ENCODE measurements at regions of chr1 and their contacts with region 1.

Region 1: DNA sequence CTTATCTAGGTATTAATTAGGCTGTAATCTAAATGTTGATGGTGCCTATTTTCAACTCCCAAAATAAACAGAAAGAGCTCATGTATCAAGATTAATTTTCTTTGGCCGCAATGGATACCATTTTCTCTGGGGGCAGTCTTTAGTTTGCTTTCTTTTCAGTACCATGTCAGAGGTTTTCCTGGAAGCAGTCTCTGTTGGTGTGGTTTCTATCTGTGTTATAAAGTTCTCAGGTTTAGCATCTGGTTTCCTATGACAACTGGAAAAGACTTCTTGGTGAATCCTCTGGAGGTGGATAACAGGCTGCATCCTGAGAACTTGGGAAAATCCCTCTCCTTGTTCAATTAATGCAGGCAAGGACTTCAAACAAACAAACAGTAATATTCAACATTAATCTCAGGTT is 38.7 kb upstream of the BATF3 start:
- DNase-seq: no peak
- ATAC-seq: peak; percentile 69
- H3K4me3 Mint-ChIP-seq: no peak overlapping the region
- H3K27ac Mint-ChIP-seq: peak overlapping the region; percentile 76
- H3K4me1 Mint-ChIP-seq: peaks cover 25% of the 10 kb centered on the region
- H3K27me3 Mint-ChIP-seq: no peaks in the 10 kb centered on the region
- CTCF ChIP-seq: no peak

Region 2: DNA sequence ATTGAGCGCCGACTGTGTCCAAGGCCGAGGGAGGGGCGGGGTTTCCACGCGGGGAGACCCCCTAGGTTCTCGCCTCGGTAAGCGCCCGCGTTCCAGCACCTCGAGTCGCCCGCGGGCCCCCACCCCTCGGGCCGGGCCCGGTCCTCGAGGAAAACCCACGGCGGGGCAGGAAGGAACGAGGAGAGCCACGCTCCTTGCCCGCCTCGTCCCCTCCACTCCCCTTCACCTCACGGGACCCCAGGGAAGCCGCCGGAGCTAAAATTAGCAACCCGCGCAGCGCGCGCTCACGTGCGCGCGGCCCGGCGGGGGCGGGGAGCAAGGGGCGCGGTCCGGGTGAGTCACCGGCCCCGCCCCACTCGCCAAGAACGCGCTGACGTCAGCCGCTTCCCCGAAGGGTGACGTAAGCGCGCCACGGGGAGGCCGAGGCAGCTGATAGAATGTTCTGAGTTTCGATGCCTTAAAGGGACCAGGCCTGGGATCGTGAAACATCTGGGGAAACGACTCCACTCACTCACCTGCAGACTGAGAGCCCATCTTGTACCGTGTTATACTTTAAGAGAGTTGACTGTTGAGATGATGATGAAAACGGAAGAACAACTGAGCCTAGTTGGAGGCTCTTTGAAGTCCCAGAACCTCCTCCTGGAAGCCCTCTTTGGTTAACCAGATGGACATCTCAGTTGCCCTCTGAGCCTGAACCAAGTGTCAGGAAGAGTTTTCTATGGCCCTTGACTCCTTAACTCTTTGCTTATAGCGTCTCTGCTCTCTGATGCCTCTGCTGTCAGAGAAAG is 179.4 kb before region 1 on chr1:
- CTCF ChIA-PET with region 1: no interaction called
- POLR2A ChIA-PET with region 1: no interaction called
- intact Hi-C with region 1: no loop called
- DNase-seq: peak; percentile 93
- ATAC-seq: peak; percentile 95
- H3K4me3 Mint-ChIP-seq: peak overlapping the region; percentile 65
- H3K27ac Mint-ChIP-seq: peak overlapping the region; percentile 93
- H3K4me1 Mint-ChIP-seq: peaks cover 14% of the 10 kb centered on the region
- H3K27me3 Mint-ChIP-seq: peaks cover 12% of the 10 kb centered on the region
- CTCF ChIP-seq: no peak

Region 3: GRCh38 chr1:212600980-212601379 is 137.3 kb before region 1 on chr1:
- CTCF ChIA-PET with region 1: no interaction called
- POLR2A ChIA-PET with region 1: no interaction called
- intact Hi-C with region 1: no loop called
- DNase-seq: peak; percentile 37
- ATAC-seq: peak; percentile 37
- H3K4me3 Mint-ChIP-seq: no peak overlapping the region
- H3K27ac Mint-ChIP-seq: peak overlapping the region; percentile 9
- H3K4me1 Mint-ChIP-seq: peaks cover 37% of the 10 kb centered on the region
- H3K27me3 Mint-ChIP-seq: peaks cover 39% of the 10 kb centered on the region
- CTCF ChIP-seq: no peak

Region 4: DNA sequence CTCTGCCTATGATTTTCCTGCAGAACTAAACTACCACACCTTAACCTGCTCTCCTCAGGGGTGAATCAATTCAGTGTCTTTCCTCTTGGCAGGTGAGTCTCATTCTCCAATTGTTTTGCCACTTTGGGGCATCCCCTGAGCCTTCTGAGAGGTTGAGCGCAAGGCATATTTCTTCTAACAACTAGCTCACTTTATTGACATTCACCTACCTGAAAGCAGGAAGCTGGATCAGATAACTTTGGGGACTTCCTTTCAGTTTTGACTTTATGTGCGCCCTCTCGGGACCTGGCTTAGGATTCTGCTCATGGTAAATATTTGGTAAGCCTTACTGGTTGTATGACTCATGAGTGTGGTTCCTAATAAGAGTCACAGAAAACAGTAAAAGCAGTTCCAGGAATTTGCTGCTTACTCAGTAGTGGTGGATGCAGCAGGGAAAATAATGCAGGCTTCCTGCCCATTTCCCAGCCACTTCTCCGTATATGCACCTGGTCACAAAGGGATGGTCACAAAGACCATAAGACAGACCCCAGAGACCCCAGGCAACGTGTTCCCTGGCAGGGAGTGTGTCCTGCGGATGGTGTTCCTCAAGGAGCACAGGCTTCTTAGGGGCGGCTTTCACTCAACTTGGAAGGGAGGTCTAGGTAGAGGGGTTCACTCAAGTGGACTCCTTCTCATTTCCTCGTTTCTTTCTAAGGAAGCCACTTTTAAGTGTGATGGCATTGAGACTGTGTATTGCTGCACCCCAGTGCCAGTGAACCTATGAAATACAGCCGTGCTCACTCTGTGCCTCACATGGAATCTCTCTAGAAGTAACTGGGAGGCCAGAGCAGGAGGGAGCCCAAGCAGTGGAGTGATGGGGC is 16.7 kb before region 1 on chr1:
- CTCF ChIA-PET with region 1: interaction called, 10 read pairs
- POLR2A ChIA-PET with region 1: interaction called, 3 read pairs
- intact Hi-C with region 1: no loop called
- DNase-seq: peak; percentile 75
- ATAC-seq: peak; percentile 86
- H3K4me3 Mint-ChIP-seq: peak overlapping the region; percentile 44
- H3K27ac Mint-ChIP-seq: peak overlapping the region; percentile 65
- H3K4me1 Mint-ChIP-seq: peaks cover 28% of the 10 kb centered on the region
- H3K27me3 Mint-ChIP-seq: peaks cover 16% of the 10 kb centered on the region
- CTCF ChIP-seq: no peak

Measured in activated CD8-positive, alpha-beta T cell treated with anti-CD3 and anti-CD28 coated beads for 36 hours (primary cell).